ENCODE measurements at regions of chr10 and their contacts with region 1.

Region 1: GRCh38 chr10:87850742-87851205 is 12.6 kb downstream of the KLLN start:
- DNase-seq: peak; percentile 68
- H3K4me3 ChIP-seq: no peak overlapping the region
- H3K27ac ChIP-seq: no peak overlapping the region
- H3K4me1 ChIP-seq: peaks cover 0 to 5% (median 2%) of the 10 kb centered on the region in 4 donors
- H3K27me3 ChIP-seq: no peaks in the 10 kb centered on the region
- CTCF ChIP-seq: peak; percentile 64 to 67 (median 66)
- EP300 ChIP-seq: no peak
- POLR2A ChIP-seq: no peak

Region 2: GRCh38 chr10:88114368-88114767 is 263.6 kb after region 1 on chr10:
- in situ Hi-C with region 1: loop called in 1 of 4 experiments (anchors 25 kb)
- intact Hi-C with region 1: loop called (anchors 10 kb)
- DNase-seq: peak; percentile 29
- H3K4me3 ChIP-seq: no peak overlapping the region
- H3K27ac ChIP-seq: no peak overlapping the region
- H3K4me1 ChIP-seq: peaks cover 0 to 21% (median 2%) of the 10 kb centered on the region in 4 donors
- H3K27me3 ChIP-seq: no peaks in the 10 kb centered on the region
- CTCF ChIP-seq: peak in 4 of 5 experiments; percentile 22 to 35 (median 30)
- EP300 ChIP-seq: no peak
- POLR2A ChIP-seq: no peak

Region 3: GRCh38 chr10:88386821-88387773 is 536.3 kb after region 1 on chr10:
- in situ Hi-C with region 1: loop called in 3 of 4 experiments (anchors 10 to 25 kb)
- intact Hi-C with region 1: no loop called
- DNase-seq: peak; percentile 40
- H3K4me3 ChIP-seq: peak overlapping the region in 2 of 4 donors; percentile 5 to 25
- H3K27ac ChIP-seq: peak overlapping the region; percentile 80 to 88 (median 86)
- H3K4me1 ChIP-seq: peaks cover 20 to 59% (median 37%) of the 10 kb centered on the region in 4 donors
- H3K27me3 ChIP-seq: no peaks in the 10 kb centered on the region
- CTCF ChIP-seq: no peak
- EP300 ChIP-seq: no peak
- POLR2A ChIP-seq: peak; percentile 43

Region 4: GRCh38 chr10:88541116-88541626 is 690.4 kb after region 1 on chr10:
- in situ Hi-C with region 1: loop called in 2 of 4 experiments (anchors 10 to 25 kb)
- intact Hi-C with region 1: no loop called
- DNase-seq: no peak
- H3K4me3 ChIP-seq: no peak overlapping the region
- H3K27ac ChIP-seq: peak overlapping the region in 1 of 4 donors; percentile 20
- H3K4me1 ChIP-seq: no peaks in the 10 kb centered on the region
- H3K27me3 ChIP-seq: no peaks in the 10 kb centered on the region
- CTCF ChIP-seq: no peak
- EP300 ChIP-seq: no peak
- POLR2A ChIP-seq: no peak

Region 5: DNA sequence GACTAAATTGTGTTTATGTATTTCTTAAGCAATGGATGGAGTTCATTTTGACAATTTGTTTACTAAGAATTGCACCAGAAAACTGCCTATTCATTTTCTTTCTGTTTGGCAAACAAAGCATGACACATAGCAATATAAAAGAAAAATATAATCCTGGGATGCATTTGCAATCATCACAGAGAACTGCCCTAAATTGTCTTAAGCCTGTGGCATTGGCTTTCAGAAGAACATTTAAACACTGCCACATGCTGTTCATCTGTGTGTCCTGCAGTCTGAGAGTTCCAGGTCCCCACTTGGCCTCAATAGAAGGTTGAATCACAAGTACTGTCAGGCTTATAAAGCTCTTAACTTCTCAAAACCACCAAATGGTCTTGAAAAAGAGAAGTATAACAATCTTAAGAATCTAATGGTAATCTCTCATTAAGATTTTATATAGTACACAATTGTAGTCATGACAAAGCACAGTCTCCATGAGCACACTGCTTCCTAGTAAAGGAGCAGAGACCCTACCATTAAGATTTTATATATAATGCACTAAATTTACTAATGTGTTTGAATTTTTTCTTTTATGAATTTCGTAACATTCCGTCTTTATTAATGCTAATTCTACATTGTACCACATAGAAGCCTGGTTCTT is 702.5 kb after region 1 on chr10:
- in situ Hi-C with region 1: loop called (anchors 10 to 25 kb)
- intact Hi-C with region 1: loop called (anchors 10 kb)
- DNase-seq: peak; percentile 41
- H3K4me3 ChIP-seq: no peak overlapping the region
- H3K27ac ChIP-seq: no peak overlapping the region
- H3K4me1 ChIP-seq: peaks cover 0 to 3% (median 0%) of the 10 kb centered on the region in 4 donors
- H3K27me3 ChIP-seq: no peaks in the 10 kb centered on the region
- CTCF ChIP-seq: peak; percentile 63 to 79 (median 75)
- EP300 ChIP-seq: no peak
- POLR2A ChIP-seq: no peak